ENCODE measurements at regions of chr4 and their contacts with region 1.

Region 1: GRCh38 chr4:87679449-87680169 is 29.5 kb downstream of the DMP1 start:
- DNase-seq: no peak
- H3K4me3 Mint-ChIP-seq: no peak overlapping the region
- H3K27ac Mint-ChIP-seq: no peak overlapping the region
- H3K4me1 Mint-ChIP-seq: no peaks in the 10 kb centered on the region
- H3K27me3 Mint-ChIP-seq: no peaks in the 10 kb centered on the region

Region 2: GRCh38 chr4:87489678-87490077 is 189.9 kb before region 1 on chr4:
- intact Hi-C with region 1: no loop called
- DNase-seq: no peak
- H3K4me3 Mint-ChIP-seq: no peak overlapping the region
- H3K27ac Mint-ChIP-seq: no peak overlapping the region
- H3K4me1 Mint-ChIP-seq: peaks cover 2% of the 10 kb centered on the region
- H3K27me3 Mint-ChIP-seq: peaks cover 6% of the 10 kb centered on the region

Region 3: DNA sequence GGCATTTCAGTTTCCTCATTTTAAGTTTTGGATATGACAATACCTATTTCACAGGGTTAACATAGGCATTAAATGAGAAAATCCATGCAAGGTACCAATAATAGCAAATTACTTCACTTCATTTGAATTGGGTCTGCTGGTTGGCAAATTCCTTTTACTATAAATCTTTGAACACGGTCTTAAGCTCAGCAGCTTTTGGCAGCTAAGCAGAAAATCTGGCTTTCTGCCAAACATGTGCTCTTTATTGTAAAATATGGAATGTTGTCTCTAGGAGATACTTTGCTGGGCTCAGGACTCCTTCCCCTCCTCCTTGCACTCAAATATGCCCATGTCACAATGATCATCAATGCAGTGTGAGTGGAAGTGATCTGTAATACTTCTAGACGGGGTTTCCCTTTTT is 46.4 kb before region 1 on chr4:
- intact Hi-C with region 1: no loop called
- DNase-seq: no peak
- H3K4me3 Mint-ChIP-seq: no peak overlapping the region
- H3K27ac Mint-ChIP-seq: no peak overlapping the region
- H3K4me1 Mint-ChIP-seq: no peaks in the 10 kb centered on the region
- H3K27me3 Mint-ChIP-seq: peaks cover 3% of the 10 kb centered on the region

Region 4: DNA sequence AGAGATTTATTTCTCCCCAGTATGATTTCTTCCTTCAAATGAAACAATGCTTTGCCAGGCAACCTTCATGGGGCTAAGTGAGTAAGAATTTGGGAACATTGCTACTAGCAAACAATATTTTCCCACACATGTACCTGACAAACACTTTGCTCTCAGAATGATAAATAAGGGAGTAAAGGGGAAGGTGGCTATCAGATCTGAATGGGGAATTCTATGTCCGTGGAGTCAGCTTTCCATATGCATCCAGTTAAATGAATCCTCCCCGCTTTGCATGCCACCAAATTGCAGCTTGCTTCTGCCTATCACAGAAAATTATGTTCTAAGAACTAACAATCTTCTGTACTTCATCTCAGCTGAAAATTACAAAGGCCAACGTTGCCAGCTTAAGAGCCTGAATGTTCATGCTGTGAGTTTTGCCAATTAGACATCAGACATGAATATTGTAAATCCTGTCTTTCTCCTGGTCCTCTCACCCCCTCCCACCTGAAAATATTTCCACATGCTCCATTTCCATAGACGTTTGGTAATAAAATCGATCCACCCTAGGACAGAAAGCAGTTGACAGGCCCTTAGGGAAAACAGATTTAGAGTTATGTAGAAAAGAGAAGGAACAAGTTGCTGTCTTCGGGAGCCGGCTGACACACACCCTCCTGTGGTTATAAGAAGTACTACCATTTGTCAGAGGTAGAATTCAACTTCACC is 159.4 kb after region 1 on chr4:
- intact Hi-C with region 1: loop called (anchors 2 kb)
- DNase-seq: no peak
- H3K4me3 Mint-ChIP-seq: no peak overlapping the region
- H3K27ac Mint-ChIP-seq: no peak overlapping the region
- H3K4me1 Mint-ChIP-seq: no peaks in the 10 kb centered on the region
- H3K27me3 Mint-ChIP-seq: peaks cover 29% of the 10 kb centered on the region

Region 5: DNA sequence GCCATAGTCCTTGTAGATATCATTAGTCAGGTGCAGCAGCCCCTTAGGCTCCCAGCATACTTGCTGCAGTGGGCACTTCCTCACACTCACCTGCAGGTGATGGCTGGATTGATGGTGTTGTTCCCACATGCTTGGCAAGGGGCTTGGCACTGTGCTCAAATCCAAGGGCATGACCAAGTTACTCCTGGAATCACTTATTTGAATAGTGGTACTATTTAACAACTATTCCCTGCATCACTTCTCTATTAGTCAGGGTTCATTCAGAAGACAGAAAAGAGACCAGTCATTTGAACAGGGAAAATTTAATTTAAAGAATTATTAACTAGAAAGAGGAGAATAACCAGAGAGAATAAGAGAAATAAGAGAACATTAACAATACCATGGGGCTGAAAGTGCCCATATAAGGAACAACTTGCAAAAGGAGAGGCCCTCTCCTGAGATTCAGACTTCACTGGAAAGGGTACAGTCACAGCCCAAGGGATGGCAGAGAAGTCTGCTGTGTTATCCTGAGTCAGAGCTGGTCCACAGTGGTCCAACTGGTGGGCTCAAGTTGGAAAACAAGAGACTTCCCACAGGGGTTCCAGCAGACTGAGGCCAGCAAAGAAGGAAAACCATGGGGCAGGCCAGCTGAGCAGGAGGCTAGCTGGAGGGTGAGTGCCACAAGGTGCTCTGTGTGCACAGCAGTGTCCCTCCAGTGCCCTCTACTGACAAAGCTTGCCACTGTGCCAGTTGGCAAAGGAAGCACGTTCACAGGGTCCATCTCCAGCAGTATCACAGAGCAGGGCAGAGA is 305.7 kb after region 1 on chr4:
- intact Hi-C with region 1: loop called (anchors 2 kb)
- DNase-seq: no peak
- H3K4me3 Mint-ChIP-seq: no peak overlapping the region
- H3K27ac Mint-ChIP-seq: no peak overlapping the region
- H3K4me1 Mint-ChIP-seq: peaks cover 8% of the 10 kb centered on the region
- H3K27me3 Mint-ChIP-seq: peaks cover 37% of the 10 kb centered on the region

Measured in activated T-helper 2 cell treated with anti-CD3 and anti-CD28 coated beads, Interferon-gamma antibody, Interleukin-2, Interleukin-4, amounts not matched to agents 10 μg/mL and 5 μg/mL and 100 μg/mL, durations not matched to agents 14 hours and 24 hours and 36 hours (primary cell).